Endothelial cell of umbilical vein (primary cell): ENCODE measurements at regions of chr1 and their contacts with region 1.

Region 1: GRCh38 chr1:101288491-101288944 is 51.7 kb downstream of the S1PR1 start:
- DNase-seq: peak; percentile 97
- H3K4me3 ChIP-seq: no peak overlapping the region
- H3K27ac ChIP-seq: peak overlapping the region; percentile 76
- H3K4me1 ChIP-seq: peaks cover 41% of the 10 kb centered on the region
- H3K27me3 ChIP-seq: no peaks in the 10 kb centered on the region
- CTCF ChIP-seq: peak; percentile 76 to 85
- POLR2A ChIP-seq: no peak

Region 2: GRCh38 chr1:100883963-100884362 is 404.6 kb before region 1 on chr1:
- CTCF ChIA-PET with region 1: interaction called, 22 read pairs
- POLR2A ChIA-PET with region 1: no interaction called
- dilution Hi-C with region 1: no loop called
- intact Hi-C with region 1: no loop called
- DNase-seq: peak; percentile 76
- H3K4me3 ChIP-seq: no peak overlapping the region
- H3K27ac ChIP-seq: no peak overlapping the region
- H3K4me1 ChIP-seq: peaks cover 14% of the 10 kb centered on the region
- H3K27me3 ChIP-seq: no peaks in the 10 kb centered on the region
- CTCF ChIP-seq: peak in 1 of 2 donors; percentile 5
- POLR2A ChIP-seq: no peak

Region 3: DNA sequence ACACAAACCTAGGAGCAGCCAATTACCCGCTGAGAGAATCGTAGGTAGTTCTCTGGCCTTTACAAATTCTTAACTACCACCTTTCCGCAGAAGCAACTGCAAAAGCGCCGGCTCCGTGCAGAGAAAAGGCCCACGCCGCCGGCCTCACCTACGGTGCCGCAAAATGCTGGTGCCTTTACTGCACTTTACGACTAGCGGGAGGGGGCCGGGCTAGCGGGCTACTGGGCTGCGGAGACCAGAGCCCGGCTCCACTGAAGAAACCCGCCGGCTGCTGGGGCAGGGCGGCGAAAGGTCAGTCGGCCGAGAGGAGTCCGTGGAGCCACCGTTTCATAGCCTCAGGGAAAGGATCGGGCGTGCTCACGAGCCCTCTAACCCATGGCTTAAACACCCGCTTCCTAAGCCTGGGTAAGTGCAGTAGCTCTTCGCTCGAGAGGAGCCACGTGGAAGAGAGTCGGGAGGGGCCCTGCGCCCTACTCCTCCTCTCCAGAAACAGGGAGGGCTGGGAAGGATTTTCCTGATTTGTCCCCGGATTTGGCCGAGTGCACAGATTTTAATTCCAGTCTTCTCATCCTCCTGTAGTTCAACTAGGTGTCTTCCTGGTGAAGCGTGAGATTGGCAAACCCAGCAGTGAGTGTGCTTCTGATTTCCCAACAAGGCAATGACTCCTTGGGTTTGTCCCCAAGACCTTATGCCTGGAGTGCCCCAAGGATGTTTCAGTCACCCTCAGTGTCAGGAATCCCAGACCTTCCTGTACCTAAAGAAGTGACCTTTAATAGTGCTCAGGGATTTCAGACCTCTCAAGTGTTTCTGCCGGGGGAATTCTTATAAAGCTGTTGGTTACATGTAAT is 262.6 kb before region 1 on chr1 and contains the start of gene DPH5:
- CTCF ChIA-PET with region 1: interaction called, 3 read pairs
- POLR2A ChIA-PET with region 1: no interaction called
- dilution Hi-C with region 1: no loop called
- intact Hi-C with region 1: loop called (anchors 1 kb)
- DNase-seq: peak; percentile 93
- H3K4me3 ChIP-seq: peak within 1 kb of the TSS; percentile 70 to 96 (median 76)
- H3K27ac ChIP-seq: peak within 1 kb of the TSS; percentile 75
- H3K4me1 ChIP-seq: peaks cover 22% of the 10 kb centered on the region
- H3K27me3 ChIP-seq: no peaks in the 10 kb centered on the region
- CTCF ChIP-seq: no peak
- POLR2A ChIP-seq: peak; percentile 93
- total RNA-seq, gene DPH5: 31.3 and 37.2 TPM in 2 replicates

Region 4: DNA sequence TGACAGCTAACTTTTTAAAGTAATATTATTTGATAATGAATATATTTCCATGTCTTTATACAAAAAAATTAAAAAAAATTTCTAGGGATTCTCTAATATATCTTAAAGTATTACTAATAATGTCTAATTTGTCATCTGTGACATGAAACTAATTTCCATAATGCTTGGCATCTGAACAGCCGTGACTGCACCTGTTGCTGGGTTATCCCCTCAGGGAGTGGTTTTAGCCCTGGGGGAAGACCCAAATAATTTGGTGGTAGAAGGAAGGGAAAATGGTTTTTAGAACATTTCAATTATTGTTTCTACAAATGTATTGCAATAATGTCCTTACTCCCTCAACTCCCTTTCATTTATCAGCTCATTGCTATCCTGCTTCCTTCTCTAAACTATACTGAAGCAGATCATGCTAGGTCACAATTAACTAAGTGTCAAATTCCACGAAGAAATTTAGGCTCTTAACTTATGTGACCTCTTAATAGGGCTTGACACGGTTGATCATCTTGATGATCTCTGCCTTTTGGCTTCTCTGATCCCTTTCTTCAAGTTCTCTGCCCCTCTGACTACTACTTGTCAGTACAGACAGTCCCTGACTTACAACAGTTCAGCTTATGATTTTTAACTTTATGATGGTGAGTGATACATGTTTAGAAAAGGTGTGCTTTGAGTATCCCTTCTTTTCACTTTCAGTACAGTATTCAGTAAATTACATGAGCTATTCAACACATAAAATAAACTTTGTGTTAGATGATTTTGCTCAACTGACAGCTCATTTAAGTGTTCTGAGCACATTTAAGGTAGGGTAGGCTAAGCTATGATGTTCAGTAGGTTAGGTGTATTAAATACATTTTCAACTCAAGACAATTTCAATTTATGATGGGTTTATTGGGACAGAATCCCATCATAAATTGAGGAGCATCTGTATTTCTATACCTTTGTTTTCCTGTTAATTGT is 236.6 kb before region 1 on chr1:
- CTCF ChIA-PET with region 1: no interaction called
- POLR2A ChIA-PET with region 1: no interaction called
- dilution Hi-C with region 1: no loop called
- intact Hi-C with region 1: no loop called
- DNase-seq: no peak
- H3K4me3 ChIP-seq: no peak overlapping the region
- H3K27ac ChIP-seq: no peak overlapping the region
- H3K4me1 ChIP-seq: no peaks in the 10 kb centered on the region
- H3K27me3 ChIP-seq: no peaks in the 10 kb centered on the region
- CTCF ChIP-seq: no peak
- POLR2A ChIP-seq: no peak

Region 5: GRCh38 chr1:101119289-101119688 is 169.2 kb before region 1 on chr1:
- CTCF ChIA-PET with region 1: no interaction called
- POLR2A ChIA-PET with region 1: no interaction called
- dilution Hi-C with region 1: no loop called
- intact Hi-C with region 1: no loop called
- DNase-seq: no peak
- H3K4me3 ChIP-seq: no peak overlapping the region
- H3K27ac ChIP-seq: no peak overlapping the region
- H3K4me1 ChIP-seq: no peaks in the 10 kb centered on the region
- H3K27me3 ChIP-seq: no peaks in the 10 kb centered on the region
- CTCF ChIP-seq: no peak
- POLR2A ChIP-seq: no peak

Region 6: GRCh38 chr1:101178688-101179491 is 109.6 kb before region 1 on chr1:
- CTCF ChIA-PET with region 1: interaction called, 18 read pairs
- POLR2A ChIA-PET with region 1: no interaction called
- dilution Hi-C with region 1: no loop called
- intact Hi-C with region 1: no loop called
- DNase-seq: no peak
- H3K4me3 ChIP-seq: no peak overlapping the region
- H3K27ac ChIP-seq: peak overlapping the region; percentile 9
- H3K4me1 ChIP-seq: peaks cover 62% of the 10 kb centered on the region
- H3K27me3 ChIP-seq: no peaks in the 10 kb centered on the region
- CTCF ChIP-seq: no peak
- POLR2A ChIP-seq: no peak

Region 7: DNA sequence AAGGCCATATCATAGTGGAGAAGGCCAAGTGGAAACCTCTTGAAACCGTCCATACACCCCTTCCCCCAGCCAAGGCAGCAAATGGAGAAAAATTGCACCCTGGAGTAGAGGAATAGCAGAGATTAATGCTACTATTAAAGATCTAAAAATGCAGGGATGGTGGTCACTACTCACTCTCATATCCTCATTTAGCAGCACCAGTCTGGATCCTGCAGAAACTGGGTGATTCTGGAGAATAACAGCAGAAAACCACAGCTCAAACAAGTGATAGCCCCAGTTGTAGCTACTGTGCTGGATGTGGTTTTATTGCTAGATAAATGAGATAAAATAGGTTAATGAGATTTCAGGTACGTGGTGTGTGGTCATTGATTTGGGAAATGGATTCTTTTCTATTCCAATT is 21.4 kb before region 1 on chr1:
- CTCF ChIA-PET with region 1: interaction called, 17 read pairs
- POLR2A ChIA-PET with region 1: no interaction called
- dilution Hi-C with region 1: no loop called
- intact Hi-C with region 1: loop called (anchors 1 kb)
- DNase-seq: no peak
- H3K4me3 ChIP-seq: no peak overlapping the region
- H3K27ac ChIP-seq: no peak overlapping the region
- H3K4me1 ChIP-seq: peaks cover 27% of the 10 kb centered on the region
- H3K27me3 ChIP-seq: no peaks in the 10 kb centered on the region
- CTCF ChIP-seq: no peak
- POLR2A ChIP-seq: no peak

Region 8: GRCh38 chr1:101357444-101357986 is 69.0 kb after region 1 on chr1:
- CTCF ChIA-PET with region 1: interaction called, 46 read pairs
- POLR2A ChIA-PET with region 1: no interaction called
- dilution Hi-C with region 1: no loop called
- intact Hi-C with region 1: loop called (anchors 1 kb)
- DNase-seq: peak; percentile 88
- H3K4me3 ChIP-seq: no peak overlapping the region
- H3K27ac ChIP-seq: no peak overlapping the region
- H3K4me1 ChIP-seq: no peaks in the 10 kb centered on the region
- H3K27me3 ChIP-seq: no peaks in the 10 kb centered on the region
- CTCF ChIP-seq: peak; percentile 73 to 88
- POLR2A ChIP-seq: no peak